ENCODE measurements at regions of chr18 and their contacts with region 1.

Region 1: GRCh38 chr18:22556222-22557167 is 138.8 kb upstream of the CTAGE1 start:
- DNase-seq: peak; percentile 91

Region 2: DNA sequence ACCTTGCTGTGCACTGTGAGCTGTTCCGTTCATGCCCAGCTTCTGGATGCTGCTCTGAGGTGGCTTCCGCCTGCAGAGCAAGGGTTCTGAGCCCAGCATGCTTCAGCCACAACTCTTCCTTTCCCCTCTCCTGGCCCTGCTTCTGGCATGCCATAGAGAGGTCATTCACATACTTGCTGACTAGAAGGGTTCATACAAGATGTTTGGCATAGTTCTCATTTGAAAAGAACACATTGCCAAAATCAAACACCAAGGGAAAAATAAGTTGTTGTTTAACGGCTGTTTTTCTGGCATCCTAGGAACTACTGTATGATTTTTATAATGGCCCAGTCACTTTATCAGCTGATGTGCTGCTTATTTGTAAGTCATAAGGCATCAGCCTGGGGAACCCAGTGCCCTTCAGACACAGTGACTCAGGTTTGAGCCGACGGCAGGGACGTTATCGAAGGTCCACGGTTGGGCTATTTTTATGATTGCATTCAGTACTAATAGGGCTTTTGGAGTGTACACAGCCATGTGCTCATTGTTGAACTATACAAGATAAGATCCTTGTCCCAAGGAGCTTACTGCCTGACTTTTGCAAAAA is 84.9 kb before region 1 on chr18:
- intact Hi-C with region 1: loop called (anchors 1 kb)
- DNase-seq: peak; percentile 80

Region 3: DNA sequence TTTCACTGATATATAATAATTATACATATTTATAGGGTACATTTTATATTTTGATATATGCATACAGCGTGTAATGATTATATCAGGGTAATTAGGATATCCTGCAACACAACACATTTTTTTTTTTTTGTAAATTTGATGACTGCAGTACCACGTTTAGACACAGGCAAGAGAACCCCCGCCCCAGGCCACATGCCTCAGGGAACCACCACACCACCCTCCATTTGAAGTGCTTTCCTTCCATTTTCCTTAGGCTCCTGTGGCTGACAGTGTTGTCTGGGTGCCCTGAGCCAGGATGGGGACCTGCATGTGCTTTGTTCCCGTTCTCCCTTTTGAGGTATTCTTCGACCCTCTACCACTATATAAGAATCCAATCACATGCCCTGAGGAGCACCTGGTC is 22.8 kb after region 1 on chr18:
- intact Hi-C with region 1: no loop called
- DNase-seq: no peak

Measured in cardiac septum (tissue), 1 donor.